ENCODE measurements at regions of chr6 and their contacts with region 1.

Region 1: GRCh38 chr6:26156076-26156849 is 69.0 kb downstream of the HFE start:
- DNase-seq: peak; percentile 67 to 95
- H3K4me3 ChIP-seq: peak overlapping the region; percentile 90 to 100 (median 92)
- H3K27ac ChIP-seq: peak overlapping the region; percentile 97
- H3K4me1 ChIP-seq: peaks cover 0 to 3% (median 3%) of the 10 kb centered on the region in 4 experiments; a peak in 5 of 7 replicates
- H3K27me3 ChIP-seq: no peaks in the 10 kb centered on the region
- CTCF ChIP-seq: no peak
- EP300 ChIP-seq: no peak
- POLR2A ChIP-seq: peak; percentile 87 to 97
- RAD21 ChIP-seq: 0 out of 4 replicates have a peak, but pooled peaks have one; percentile 2 to 9

Region 2: GRCh38 chr6:25913741-25914140 is 242.5 kb before region 1 on chr6:
- CTCF ChIA-PET with region 1: no interaction called
- POLR2A ChIA-PET with region 1: no interaction called
- DNase-seq: no peak
- H3K4me3 ChIP-seq: no peak overlapping the region
- H3K27ac ChIP-seq: no peak overlapping the region
- H3K4me1 ChIP-seq: no peaks in the 10 kb centered on the region
- H3K27me3 ChIP-seq: no peaks in the 10 kb centered on the region
- CTCF ChIP-seq: no peak
- EP300 ChIP-seq: no peak
- POLR2A ChIP-seq: no peak
- RAD21 ChIP-seq: no peak

Region 3: GRCh38 chr6:25984265-25984664 is 172.0 kb before region 1 on chr6:
- CTCF ChIA-PET with region 1: no interaction called
- POLR2A ChIA-PET with region 1: no interaction called
- DNase-seq: no peak
- H3K4me3 ChIP-seq: no peak overlapping the region
- H3K27ac ChIP-seq: no peak overlapping the region
- H3K4me1 ChIP-seq: peaks cover 0 to 5% (median 2%) of the 10 kb centered on the region in 4 experiments; a peak in 2 of 7 replicates
- H3K27me3 ChIP-seq: no peaks in the 10 kb centered on the region
- CTCF ChIP-seq: no peak
- EP300 ChIP-seq: no peak
- POLR2A ChIP-seq: no peak
- RAD21 ChIP-seq: no peak

Region 4: GRCh38 chr6:26054857-26055669 is 101.2 kb before region 1 on chr6:
- CTCF ChIA-PET with region 1: no interaction called
- POLR2A ChIA-PET with region 1: interaction called, 100 read pairs
- DNase-seq: peak; percentile 73 to 75
- H3K4me3 ChIP-seq: peak overlapping the region; percentile 82 to 95 (median 83)
- H3K27ac ChIP-seq: peak overlapping the region; percentile 93
- H3K4me1 ChIP-seq: peaks cover 0 to 3% (median 0%) of the 10 kb centered on the region in 4 experiments; a peak in 1 of 7 replicates
- H3K27me3 ChIP-seq: no peaks in the 10 kb centered on the region
- CTCF ChIP-seq: no peak
- EP300 ChIP-seq: no peak
- POLR2A ChIP-seq: peak; percentile 95 to 97
- RAD21 ChIP-seq: peak; percentile 14 to 29; a peak in 2 of 4 replicates

Region 5: DNA sequence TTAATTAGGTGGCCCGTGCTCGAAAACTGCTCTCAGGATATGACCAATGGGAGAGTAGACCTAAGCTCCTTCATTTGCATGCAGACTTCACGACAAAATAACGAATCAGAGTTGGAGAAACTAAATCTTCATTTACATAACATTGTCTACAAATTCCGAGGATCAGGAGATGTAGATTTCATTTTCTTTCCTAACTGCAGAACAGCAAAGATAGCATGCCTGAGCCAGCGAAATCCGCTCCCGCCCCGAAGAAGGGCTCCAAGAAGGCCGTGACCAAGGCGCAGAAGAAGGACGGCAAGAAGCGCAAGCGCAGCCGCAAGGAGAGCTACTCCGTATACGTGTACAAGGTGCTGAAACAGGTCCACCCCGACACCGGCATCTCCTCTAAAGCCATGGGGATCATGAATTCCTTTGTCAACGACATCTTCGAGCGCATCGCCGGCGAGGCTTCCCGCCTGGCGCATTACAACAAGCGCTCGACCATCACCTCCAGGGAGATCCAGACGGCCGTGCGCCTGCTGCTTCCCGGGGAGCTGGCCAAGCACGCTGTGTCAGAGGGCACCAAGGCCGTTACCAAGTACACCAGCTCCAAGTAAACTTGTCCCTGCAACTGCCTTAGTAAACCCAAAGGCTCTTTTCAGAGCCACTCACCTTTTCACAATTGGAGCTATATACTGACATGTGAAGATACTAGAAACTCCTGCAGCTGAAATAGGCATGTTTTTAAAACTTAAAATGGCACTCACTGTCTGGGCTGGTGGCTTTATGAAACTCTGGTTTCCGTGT is 27.5 kb after region 1 on chr6:
- CTCF ChIA-PET with region 1: interaction called, 4 read pairs
- POLR2A ChIA-PET with region 1: interaction called, 2,060 read pairs
- DNase-seq: peak in 1 of 2 experiments; percentile 82
- H3K4me3 ChIP-seq: peak overlapping the region; percentile 45 to 73 (median 70)
- H3K27ac ChIP-seq: peak overlapping the region; percentile 97
- H3K4me1 ChIP-seq: peaks cover 0 to 17% (median 8%) of the 10 kb centered on the region in 4 experiments; a peak in 5 of 7 replicates
- H3K27me3 ChIP-seq: no peaks in the 10 kb centered on the region
- CTCF ChIP-seq: no peak
- EP300 ChIP-seq: no peak
- POLR2A ChIP-seq: peak; percentile 94 to 99
- RAD21 ChIP-seq: no peak

Region 6: GRCh38 chr6:26249957-26250697 is 93.9 kb after region 1 on chr6:
- CTCF ChIA-PET with region 1: no interaction called
- POLR2A ChIA-PET with region 1: interaction called, 91 read pairs
- DNase-seq: peak in 1 of 2 experiments; percentile 73
- H3K4me3 ChIP-seq: peak overlapping the region; percentile 75 to 98 (median 90)
- H3K27ac ChIP-seq: peak overlapping the region; percentile 97
- H3K4me1 ChIP-seq: peaks cover 0 to 5% (median 4%) of the 10 kb centered on the region in 4 experiments; a peak in 5 of 7 replicates
- H3K27me3 ChIP-seq: no peaks in the 10 kb centered on the region
- CTCF ChIP-seq: peak in 2 of 3 experiments; percentile 23 to 34; a peak in 2 of 4 replicates
- EP300 ChIP-seq: 0 out of 3 replicates have a peak, but pooled peaks of 1 of the 2 experiments have one; percentile 34
- POLR2A ChIP-seq: peak; percentile 98
- RAD21 ChIP-seq: no peak

Region 7: GRCh38 chr6:27132532-27133280 is 976.4 kb after region 1 on chr6:
- CTCF ChIA-PET with region 1: no interaction called
- POLR2A ChIA-PET with region 1: interaction called, 34 read pairs
- DNase-seq: peak; percentile 95 to 98
- H3K4me3 ChIP-seq: peak overlapping the region; percentile 89 to 98 (median 90)
- H3K27ac ChIP-seq: peak overlapping the region; percentile 96
- H3K4me1 ChIP-seq: peaks cover 0 to 5% (median 0%) of the 10 kb centered on the region in 4 experiments; a peak in 2 of 7 replicates
- H3K27me3 ChIP-seq: no peaks in the 10 kb centered on the region
- CTCF ChIP-seq: no peak
- EP300 ChIP-seq: no peak
- POLR2A ChIP-seq: peak; percentile 98 to 99
- RAD21 ChIP-seq: no peak

Region 8: DNA sequence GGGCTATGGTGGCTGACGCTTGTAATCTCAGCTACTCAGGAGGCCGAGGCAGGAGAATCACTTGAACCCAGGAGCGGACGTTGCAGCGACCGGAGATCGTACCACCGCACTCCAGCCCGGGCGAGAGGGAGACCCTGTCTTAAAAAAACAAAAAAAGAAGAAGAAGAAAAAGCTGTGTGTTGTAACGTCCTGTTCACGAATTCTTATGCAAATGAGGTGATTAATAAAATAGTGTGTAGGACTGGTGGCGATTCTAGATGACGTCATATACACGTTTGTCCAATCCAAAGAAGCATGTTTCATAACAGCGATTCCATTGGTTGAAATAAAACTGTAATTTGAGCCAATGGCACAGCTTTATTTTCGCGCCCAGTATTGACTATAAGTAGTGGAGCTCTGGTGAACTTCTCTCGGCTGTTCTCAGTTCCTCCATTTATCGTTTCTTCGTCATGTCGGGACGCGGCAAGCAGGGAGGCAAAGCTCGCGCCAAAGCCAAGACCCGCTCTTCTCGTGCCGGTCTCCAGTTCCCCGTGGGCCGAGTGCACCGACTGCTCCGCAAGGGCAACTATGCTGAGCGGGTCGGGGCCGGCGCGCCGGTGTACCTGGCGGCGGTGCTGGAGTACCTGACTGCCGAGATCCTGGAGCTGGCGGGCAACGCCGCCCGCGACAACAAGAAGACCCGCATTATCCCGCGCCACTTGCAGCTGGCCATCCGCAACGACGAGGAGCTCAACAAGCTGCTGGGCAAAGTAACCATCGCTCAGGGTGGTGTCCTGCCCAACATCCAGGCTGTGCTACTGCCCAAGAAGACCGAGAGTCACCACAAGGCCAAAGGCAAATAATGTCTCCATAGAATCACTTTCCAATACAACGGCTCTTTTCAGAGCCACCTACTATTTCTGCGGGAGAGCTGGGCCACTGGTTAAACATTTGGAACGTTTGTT is 1708.9 kb after region 1 on chr6:
- CTCF ChIA-PET with region 1: no interaction called
- POLR2A ChIA-PET with region 1: interaction called, 76 read pairs
- DNase-seq: peak in 1 of 2 experiments; percentile 86
- H3K4me3 ChIP-seq: peak overlapping the region; percentile 61 to 86 (median 79)
- H3K27ac ChIP-seq: peak overlapping the region; percentile 90
- H3K4me1 ChIP-seq: peaks cover 0 to 5% (median 1%) of the 10 kb centered on the region in 4 experiments; a peak in 2 of 7 replicates
- H3K27me3 ChIP-seq: no peaks in the 10 kb centered on the region
- CTCF ChIP-seq: no peak
- EP300 ChIP-seq: no peak
- POLR2A ChIP-seq: peak; percentile 93 to 97
- RAD21 ChIP-seq: no peak; a peak in 1 of 4 replicates

Measured in H1 (cell line).